H1 (cell line): ENCODE measurements at regions of chr6 and their contacts with region 1.

Region 1: DNA sequence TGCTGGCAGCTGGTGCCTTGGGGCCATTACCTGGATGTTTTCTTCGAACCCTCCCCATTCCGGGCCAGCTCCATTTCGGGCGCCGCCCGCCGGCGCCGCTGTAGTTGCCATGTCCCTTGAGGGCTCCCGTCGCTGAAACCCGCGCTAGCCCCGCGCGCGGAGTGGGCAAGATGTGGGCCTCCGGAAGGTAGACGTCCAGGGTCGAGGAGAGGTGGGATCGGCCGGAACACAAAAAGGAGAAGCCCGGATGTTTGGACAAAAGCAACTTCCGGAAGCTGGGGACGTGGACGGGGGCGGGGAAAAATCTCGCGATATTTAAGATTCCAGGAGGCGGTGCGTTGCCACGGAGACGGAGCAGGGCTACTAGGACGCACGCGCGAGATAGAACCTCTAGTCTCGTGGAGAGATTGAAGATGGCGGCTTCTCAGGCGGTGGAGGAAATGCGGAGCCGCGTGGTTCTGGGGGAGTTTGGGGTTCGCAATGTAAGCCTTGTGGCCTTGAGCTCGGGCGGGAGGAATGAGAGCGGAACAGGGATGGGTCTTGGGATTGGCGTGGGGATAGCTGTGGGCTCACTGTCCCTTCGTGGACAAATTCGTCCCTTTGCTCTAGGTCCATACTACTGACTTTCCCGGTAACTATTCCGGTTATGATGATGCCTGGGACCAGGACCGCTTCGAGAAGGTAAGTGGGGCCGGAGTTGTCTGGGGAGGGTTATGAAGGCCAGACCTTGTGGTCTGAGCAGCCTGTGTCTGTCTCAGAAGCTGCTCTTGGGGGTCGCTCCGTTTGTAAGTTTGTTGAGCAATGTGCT is at the starts of genes POLR1C and YIPF3:
- DNase-seq: peak; percentile 91 to 95
- H3K4me3 ChIP-seq: peak within 1 kb of the TSS; percentile 86 to 100 (median 96)
- H3K27ac ChIP-seq: peak within 1 kb of the TSS; percentile 82
- H3K4me1 ChIP-seq: peaks cover 4 to 17% (median 8%) of the 10 kb centered on the region in 4 experiments; a peak in 6 of 7 replicates
- H3K27me3 ChIP-seq: no peaks in the 10 kb centered on the region
- CTCF ChIP-seq: no peak
- EP300 ChIP-seq: 0 out of 3 replicates have a peak, but pooled peaks of 1 of the 2 experiments have one; percentile 15
- POLR2A ChIP-seq: peak in 1 of 2 experiments; percentile 89; a peak in 1 of 3 replicates
- RAD21 ChIP-seq: no peak
- total RNA-seq, gene POLR1C: 46.9 and 49.6 TPM in 2 replicates
- total RNA-seq, gene YIPF3: 77.2 and 78.2 TPM in 2 replicates

Region 2: GRCh38 chr6:43427406-43428111 is 89.3 kb before region 1 on chr6 and contains the start of gene ABCC10:
- CTCF ChIA-PET with region 1: no interaction called
- POLR2A ChIA-PET with region 1: no interaction called
- DNase-seq: peak; percentile 79 to 99
- H3K4me3 ChIP-seq: peak within 1 kb of the TSS; percentile 81 to 85 (median 84)
- H3K27ac ChIP-seq: peak within 1 kb of the TSS; percentile 55; the same call in 1 of the 2 replicates
- H3K4me1 ChIP-seq: peaks cover 0 to 6% (median 2%) of the 10 kb centered on the region in 4 experiments; a peak in 2 of 7 replicates
- H3K27me3 ChIP-seq: no peaks in the 10 kb centered on the region
- CTCF ChIP-seq: peak; percentile 2 to 29 (median 29); a peak in 3 of 4 replicates
- EP300 ChIP-seq: no peak
- POLR2A ChIP-seq: peak in 1 of 2 experiments; percentile 47; a peak in 1 of 3 replicates
- RAD21 ChIP-seq: no peak
- total RNA-seq, gene ABCC10: 21.0 and 24.6 TPM in 2 replicates

Region 3: GRCh38 chr6:43496370-43497128 is 20.4 kb before region 1 on chr6:
- CTCF ChIA-PET with region 1: interaction called, 536 read pairs
- POLR2A ChIA-PET with region 1: interaction called, 147 read pairs
- DNase-seq: peak in 1 of 2 experiments; percentile 72
- H3K4me3 ChIP-seq: no peak overlapping the region
- H3K27ac ChIP-seq: no peak overlapping the region
- H3K4me1 ChIP-seq: peaks cover 7 to 19% (median 11%) of the 10 kb centered on the region in 4 experiments
- H3K27me3 ChIP-seq: no peaks in the 10 kb centered on the region
- CTCF ChIP-seq: peak; percentile 71 to 88 (median 79)
- EP300 ChIP-seq: no peak
- POLR2A ChIP-seq: no peak
- RAD21 ChIP-seq: peak; percentile 90 to 91

Region 4: GRCh38 chr6:43532201-43532600 is 15.3 kb after region 1 on chr6:
- CTCF ChIA-PET with region 1: interaction called, 3 read pairs
- POLR2A ChIA-PET with region 1: interaction called, 69 read pairs
- DNase-seq: no peak
- H3K4me3 ChIP-seq: no peak overlapping the region
- H3K27ac ChIP-seq: no peak overlapping the region
- H3K4me1 ChIP-seq: no peaks in the 10 kb centered on the region
- H3K27me3 ChIP-seq: no peaks in the 10 kb centered on the region
- CTCF ChIP-seq: no peak
- EP300 ChIP-seq: no peak
- POLR2A ChIP-seq: no peak
- RAD21 ChIP-seq: no peak

Region 5: GRCh38 chr6:43541774-43542471 is 25.0 kb after region 1 on chr6:
- CTCF ChIA-PET with region 1: interaction called, 3 read pairs
- POLR2A ChIA-PET with region 1: interaction called, 29 read pairs
- DNase-seq: no peak
- H3K4me3 ChIP-seq: no peak overlapping the region
- H3K27ac ChIP-seq: no peak overlapping the region
- H3K4me1 ChIP-seq: no peaks in the 10 kb centered on the region
- H3K27me3 ChIP-seq: no peaks in the 10 kb centered on the region; a peak in 1 of 7 replicates
- CTCF ChIP-seq: no peak
- EP300 ChIP-seq: no peak
- POLR2A ChIP-seq: no peak
- RAD21 ChIP-seq: no peak

Region 6: GRCh38 chr6:43575772-43576551 is 59.1 kb after region 1 on chr6 and contains the starts of genes POLH and XPO5:
- CTCF ChIA-PET with region 1: no interaction called
- POLR2A ChIA-PET with region 1: interaction called, 16 read pairs
- DNase-seq: peak; percentile 68 to 93
- H3K4me3 ChIP-seq: peak within 1 kb of the TSS; percentile 76 to 96 (median 82)
- H3K27ac ChIP-seq: peak within 1 kb of the TSS; percentile 23; the same call in 1 of the 2 replicates
- H3K4me1 ChIP-seq: peaks cover 0 to 3% (median 0%) of the 10 kb centered on the region in 4 experiments; a peak in 2 of 7 replicates
- H3K27me3 ChIP-seq: no peaks in the 10 kb centered on the region
- CTCF ChIP-seq: no peak
- EP300 ChIP-seq: no peak
- POLR2A ChIP-seq: peak in 1 of 2 experiments; percentile 68; a peak in 2 of 3 replicates
- RAD21 ChIP-seq: no peak
- total RNA-seq, gene POLH: 11.3 and 12.4 TPM in 2 replicates
- total RNA-seq, gene XPO5: 95.7 and 101 TPM in 2 replicates